B cell (primary cell): ENCODE measurements at regions of chr17 and their contacts with region 1.

Region 1: GRCh38 chr17:28041068-28041843 is 1.2 kb upstream of the NLK start:
- DNase-seq: peak; percentile 99
- ATAC-seq: peak; percentile 91
- H3K4me3 ChIP-seq: peak overlapping the region; percentile 71 to 78 (median 78)
- H3K4me3 Mint-ChIP-seq: peak overlapping the region; percentile 91
- H3K27ac ChIP-seq: peak overlapping the region; percentile 84 to 85
- H3K27ac Mint-ChIP-seq: peak overlapping the region; percentile 89
- H3K4me1 ChIP-seq: peaks cover 35 to 42% of the 10 kb centered on the region in 2 donors
- H3K4me1 Mint-ChIP-seq: peaks cover 45% of the 10 kb centered on the region
- H3K27me3 ChIP-seq: no peaks in the 10 kb centered on the region
- H3K27me3 Mint-ChIP-seq: no peaks in the 10 kb centered on the region
- CTCF ChIP-seq: no peak

Region 2: GRCh38 chr17:27892866-27893769 is 148.1 kb before region 1 on chr17 and contains the start of gene LYRM9:
- CTCF ChIA-PET with region 1: interaction called, 6 read pairs
- POLR2A ChIA-PET with region 1: no interaction called
- intact Hi-C with region 1: loop called (anchors 1 kb)
- DNase-seq: peak; percentile 93
- ATAC-seq: peak; percentile 98
- H3K4me3 ChIP-seq: peak within 1 kb of the TSS; percentile 58 to 82 (median 71)
- H3K4me3 Mint-ChIP-seq: peak within 1 kb of the TSS; percentile 80
- H3K27ac ChIP-seq: peak within 1 kb of the TSS; percentile 12 to 57
- H3K27ac Mint-ChIP-seq: peak within 1 kb of the TSS; percentile 77
- H3K4me1 ChIP-seq: peaks cover 16 to 23% of the 10 kb centered on the region in 2 donors
- H3K4me1 Mint-ChIP-seq: peaks cover 23% of the 10 kb centered on the region
- H3K27me3 ChIP-seq: no peaks in the 10 kb centered on the region
- H3K27me3 Mint-ChIP-seq: peaks cover 4% of the 10 kb centered on the region
- CTCF ChIP-seq: peak; percentile 91
- total RNA-seq, gene LYRM9: 12.1 and 14.0 TPM in 2 replicates

Region 3: DNA sequence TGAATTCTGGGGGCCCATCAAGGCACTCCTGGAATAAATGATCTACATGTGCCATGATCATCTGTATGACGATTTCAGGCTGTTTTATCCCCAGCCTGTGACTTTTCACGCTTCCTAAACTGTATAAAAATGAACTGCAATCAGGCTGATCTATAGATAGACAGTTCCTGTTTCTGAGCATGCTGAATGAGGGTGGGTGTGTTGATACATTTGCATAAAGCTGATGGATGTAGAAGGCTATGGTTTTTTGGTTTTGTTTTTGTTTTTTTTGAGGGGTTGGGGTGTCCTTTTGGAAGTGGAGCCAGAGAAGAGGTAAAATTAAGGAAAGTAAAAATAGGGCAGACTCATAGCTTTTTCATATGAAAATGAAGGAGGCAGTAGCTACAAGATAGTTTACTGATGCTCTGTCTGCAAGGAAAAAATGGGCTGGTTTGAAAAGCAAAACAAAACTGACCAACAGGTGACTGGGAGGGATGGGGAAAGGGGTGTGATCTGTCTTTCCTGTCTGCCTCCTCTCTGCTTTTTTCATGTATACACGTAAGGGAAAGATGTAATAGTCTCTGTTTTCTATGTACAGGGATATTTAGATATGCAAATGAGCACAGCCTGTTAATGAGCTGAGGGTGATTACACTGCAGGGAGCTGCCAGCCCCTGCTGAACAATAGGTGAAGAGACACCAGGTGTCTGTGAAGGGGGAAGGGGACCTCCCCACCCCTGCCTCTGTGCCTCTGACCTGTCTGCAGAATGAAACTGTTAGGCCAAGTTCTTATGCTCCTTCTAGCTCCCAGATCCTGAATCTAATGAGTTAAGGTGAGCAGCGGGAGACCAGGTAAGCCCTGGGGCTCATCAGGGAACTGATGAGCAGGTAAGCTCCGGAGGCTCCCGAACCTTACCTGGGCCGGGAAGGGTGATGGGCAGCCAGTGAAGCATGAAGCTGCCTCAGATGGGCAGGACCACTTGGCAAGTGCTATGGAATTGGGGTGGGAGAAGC is 101.5 kb before region 1 on chr17:
- CTCF ChIA-PET with region 1: no interaction called
- POLR2A ChIA-PET with region 1: no interaction called
- intact Hi-C with region 1: loop called (anchors 10 kb)
- DNase-seq: peak; percentile 57
- ATAC-seq: peak; percentile 80
- H3K4me3 ChIP-seq: peak overlapping the region in 1 of 5 experiments; percentile 34
- H3K4me3 Mint-ChIP-seq: peak overlapping the region; percentile 72
- H3K27ac ChIP-seq: no peak overlapping the region
- H3K27ac Mint-ChIP-seq: peak overlapping the region; percentile 63
- H3K4me1 ChIP-seq: peaks cover 20 to 22% of the 10 kb centered on the region in 2 donors
- H3K4me1 Mint-ChIP-seq: peaks cover 28% of the 10 kb centered on the region
- H3K27me3 ChIP-seq: peaks cover 0 to 6% (median 0%) of the 10 kb centered on the region in 4 experiments
- H3K27me3 Mint-ChIP-seq: peaks cover 19% of the 10 kb centered on the region
- CTCF ChIP-seq: no peak

Region 4: DNA sequence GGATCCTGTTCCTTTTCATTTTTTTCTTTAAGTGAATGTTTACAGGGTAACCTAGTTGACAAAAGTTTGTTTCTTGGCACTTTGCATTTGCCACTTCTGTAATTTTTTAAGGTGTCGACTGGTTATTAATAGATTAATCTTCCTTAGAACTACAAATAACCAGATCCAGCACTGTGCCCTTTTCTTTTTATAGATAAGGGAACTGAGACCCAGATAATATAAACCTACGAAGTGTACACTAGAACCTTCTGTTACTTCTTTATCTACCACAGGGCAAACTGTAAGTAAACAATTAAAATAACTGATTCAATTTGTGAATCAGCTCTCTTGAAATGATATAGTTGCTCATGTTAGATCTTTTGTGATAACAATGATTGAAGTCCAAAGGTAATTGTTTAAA is 56.6 kb after region 1 on chr17:
- CTCF ChIA-PET with region 1: no interaction called
- POLR2A ChIA-PET with region 1: no interaction called
- intact Hi-C with region 1: loop called (anchors 5 kb)
- DNase-seq: peak; percentile 63
- ATAC-seq: peak; percentile 84
- H3K4me3 ChIP-seq: peak overlapping the region in 1 of 5 experiments; percentile 9
- H3K4me3 Mint-ChIP-seq: peak overlapping the region; percentile 61
- H3K27ac ChIP-seq: peak overlapping the region; percentile 69 to 83
- H3K27ac Mint-ChIP-seq: peak overlapping the region; percentile 86
- H3K4me1 ChIP-seq: peaks cover 18 to 41% of the 10 kb centered on the region in 2 donors
- H3K4me1 Mint-ChIP-seq: peaks cover 58% of the 10 kb centered on the region
- H3K27me3 ChIP-seq: no peaks in the 10 kb centered on the region
- H3K27me3 Mint-ChIP-seq: no peaks in the 10 kb centered on the region
- CTCF ChIP-seq: no peak

Region 5: DNA sequence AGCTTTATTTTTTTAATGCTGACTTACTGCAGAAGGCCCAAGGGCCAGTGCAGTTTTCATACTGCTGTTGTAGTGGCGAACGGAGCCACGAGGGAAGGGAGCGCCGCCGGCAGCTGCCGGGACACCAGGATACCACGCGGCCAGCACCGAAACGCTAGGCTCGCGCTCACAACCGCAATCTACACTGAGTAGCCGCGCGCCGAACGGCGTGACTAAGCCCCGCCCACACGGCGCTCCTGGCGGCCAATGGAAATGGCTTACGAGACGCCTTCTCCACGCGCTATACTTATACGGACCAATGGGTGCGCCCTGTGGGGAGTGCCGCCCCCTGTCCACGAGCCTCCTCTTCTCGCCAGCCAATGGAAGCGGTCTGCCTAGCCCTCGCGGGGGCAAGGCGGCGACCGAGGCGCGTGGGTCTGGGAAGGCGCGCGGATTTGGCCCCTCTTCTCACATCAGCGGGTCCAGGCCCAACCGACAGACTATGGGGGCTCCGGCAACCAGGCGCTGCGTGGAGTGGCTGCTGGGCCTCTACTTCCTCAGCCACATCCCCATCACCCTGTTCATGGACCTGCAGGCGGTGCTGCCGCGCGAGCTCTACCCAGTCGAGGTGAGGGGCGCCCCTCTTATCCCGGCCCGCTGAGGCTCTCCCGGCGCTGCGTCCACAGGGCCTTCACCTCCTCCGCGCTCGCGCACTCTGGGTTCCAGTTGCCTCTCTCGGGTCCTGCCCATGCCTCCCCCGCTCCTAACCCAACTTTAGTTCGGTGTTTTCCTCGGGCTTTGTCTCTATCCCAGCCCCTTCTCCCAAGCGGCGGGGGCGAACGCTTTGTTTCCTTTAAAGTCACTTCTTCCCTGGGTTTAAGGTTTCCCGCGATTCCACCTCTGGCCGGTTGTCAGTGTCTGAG is 277.8 kb after region 1 on chr17 and contains the start of gene TMEM97:
- CTCF ChIA-PET with region 1: no interaction called
- POLR2A ChIA-PET with region 1: no interaction called
- intact Hi-C with region 1: loop called (anchors 2 kb)
- DNase-seq: peak; percentile 96
- ATAC-seq: peak; percentile 99
- H3K4me3 ChIP-seq: peak within 1 kb of the TSS; percentile 49 to 83 (median 67)
- H3K4me3 Mint-ChIP-seq: peak within 1 kb of the TSS; percentile 88
- H3K27ac ChIP-seq: peak within 1 kb of the TSS; percentile 8 to 37
- H3K27ac Mint-ChIP-seq: peak within 1 kb of the TSS; percentile 88
- H3K4me1 ChIP-seq: peaks cover 13 to 22% of the 10 kb centered on the region in 2 donors
- H3K4me1 Mint-ChIP-seq: peaks cover 22% of the 10 kb centered on the region
- H3K27me3 ChIP-seq: no peaks in the 10 kb centered on the region
- H3K27me3 Mint-ChIP-seq: no peaks in the 10 kb centered on the region
- CTCF ChIP-seq: no peak
- total RNA-seq, gene TMEM97: 5.4 and 6.4 TPM in 2 replicates